Gastrocnemius medialis (tissue), 4 donors: ENCODE measurements at regions of chr2 and their contacts with region 1.

Region 1: DNA sequence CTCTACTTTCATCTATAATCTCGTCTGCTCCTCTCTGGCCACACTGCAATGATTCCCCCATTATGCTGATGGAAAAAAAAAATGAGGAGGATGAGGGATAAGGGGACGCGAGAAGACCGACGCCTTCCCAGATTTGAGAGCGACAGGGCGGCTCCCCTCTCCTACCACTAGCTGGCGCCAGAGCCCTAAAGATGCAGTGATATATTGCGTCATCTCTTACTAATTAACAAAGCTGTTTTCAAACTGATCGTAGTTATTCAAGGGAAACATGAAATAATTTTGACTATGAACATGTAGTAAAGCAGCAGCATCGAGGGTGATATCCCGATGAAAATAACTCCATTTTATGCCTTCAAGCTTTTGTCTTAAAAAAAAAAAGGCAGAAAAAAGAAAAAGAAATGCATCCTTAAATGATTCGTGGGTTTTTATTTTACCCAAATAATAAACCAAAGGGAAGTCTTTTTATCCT is 48.0 kb upstream of the HNRNPA3 start:
- DNase-seq: peak; percentile 59 to 71
- ATAC-seq: peak; percentile 81 to 83
- H3K4me3 ChIP-seq: peak overlapping the region; percentile 41 to 74 (median 52)
- H3K27ac ChIP-seq: peak overlapping the region; percentile 71 to 86 (median 80)
- H3K4me1 ChIP-seq: peaks cover 16 to 23% of the 10 kb centered on the region in 2 donors
- H3K27me3 ChIP-seq: no peaks in the 10 kb centered on the region
- CTCF ChIP-seq: peak; percentile 97 to 100 (median 100)
- POLR2A ChIP-seq: no peak

Region 2: GRCh38 chr2:176140513-176141317 is 1023.9 kb before region 1 on chr2:
- in situ Hi-C with region 1: loop called in 2 of 4 experiments (anchors 25 kb)
- intact Hi-C with region 1: no loop called
- DNase-seq: peak in 1 of 2 donors; percentile 39
- ATAC-seq: peak; percentile 53 to 69
- H3K4me3 ChIP-seq: peak overlapping the region; percentile 61 to 80 (median 74)
- H3K27ac ChIP-seq: peak overlapping the region; percentile 81 to 89 (median 86)
- H3K4me1 ChIP-seq: peaks cover 11 to 12% of the 10 kb centered on the region in 2 donors
- H3K27me3 ChIP-seq: peaks cover 0 to 23% (median 20%) of the 10 kb centered on the region in 3 donors
- CTCF ChIP-seq: peak; percentile 86 to 95 (median 90)
- POLR2A ChIP-seq: no peak

Region 3: DNA sequence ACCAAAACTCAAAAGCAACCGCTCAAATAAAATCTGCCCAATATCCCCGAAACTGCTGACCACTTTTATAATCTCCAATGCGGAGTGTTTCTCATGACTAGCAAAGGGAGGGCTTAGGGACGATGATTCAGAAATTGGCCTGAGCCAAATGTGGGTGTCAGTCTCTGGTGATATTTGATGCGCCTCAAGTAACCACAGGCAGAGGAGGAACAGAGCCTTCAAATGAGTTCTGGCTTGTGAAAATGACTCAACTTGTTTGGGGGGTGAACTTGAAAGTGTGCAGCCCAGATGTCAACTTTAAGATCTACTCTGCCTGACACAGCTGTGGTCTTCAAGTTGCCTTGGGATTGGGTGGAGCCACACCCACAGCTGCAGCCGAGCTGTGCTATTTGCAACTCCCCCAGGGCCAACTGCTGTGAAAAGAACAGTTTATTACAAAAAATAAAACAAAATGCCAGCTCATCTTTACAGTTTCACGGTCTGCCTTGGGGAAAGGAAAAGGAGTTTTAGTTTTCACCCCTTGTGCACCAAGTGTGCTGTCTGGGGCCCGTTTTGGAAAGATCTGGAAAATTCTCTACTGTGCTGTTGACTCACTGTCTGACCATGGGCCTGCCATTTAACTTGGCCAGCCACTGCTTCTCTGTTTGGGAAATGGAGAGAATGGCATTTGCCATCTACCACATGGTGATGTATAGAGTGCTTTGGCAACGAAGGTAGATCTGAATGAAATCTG is 673.3 kb before region 1 on chr2:
- in situ Hi-C with region 1: no loop called
- intact Hi-C with region 1: no loop called
- DNase-seq: peak; percentile 67 to 83
- ATAC-seq: peak; percentile 89 to 93
- H3K4me3 ChIP-seq: peak overlapping the region in 3 of 4 donors; percentile 12 to 45 (median 32)
- H3K27ac ChIP-seq: peak overlapping the region; percentile 64 to 75 (median 67)
- H3K4me1 ChIP-seq: peaks cover 3 to 6% of the 10 kb centered on the region in 2 donors
- H3K27me3 ChIP-seq: peaks cover 0 to 5% (median 0%) of the 10 kb centered on the region in 3 donors
- CTCF ChIP-seq: no peak
- POLR2A ChIP-seq: peak; percentile 17 to 31

Region 4: DNA sequence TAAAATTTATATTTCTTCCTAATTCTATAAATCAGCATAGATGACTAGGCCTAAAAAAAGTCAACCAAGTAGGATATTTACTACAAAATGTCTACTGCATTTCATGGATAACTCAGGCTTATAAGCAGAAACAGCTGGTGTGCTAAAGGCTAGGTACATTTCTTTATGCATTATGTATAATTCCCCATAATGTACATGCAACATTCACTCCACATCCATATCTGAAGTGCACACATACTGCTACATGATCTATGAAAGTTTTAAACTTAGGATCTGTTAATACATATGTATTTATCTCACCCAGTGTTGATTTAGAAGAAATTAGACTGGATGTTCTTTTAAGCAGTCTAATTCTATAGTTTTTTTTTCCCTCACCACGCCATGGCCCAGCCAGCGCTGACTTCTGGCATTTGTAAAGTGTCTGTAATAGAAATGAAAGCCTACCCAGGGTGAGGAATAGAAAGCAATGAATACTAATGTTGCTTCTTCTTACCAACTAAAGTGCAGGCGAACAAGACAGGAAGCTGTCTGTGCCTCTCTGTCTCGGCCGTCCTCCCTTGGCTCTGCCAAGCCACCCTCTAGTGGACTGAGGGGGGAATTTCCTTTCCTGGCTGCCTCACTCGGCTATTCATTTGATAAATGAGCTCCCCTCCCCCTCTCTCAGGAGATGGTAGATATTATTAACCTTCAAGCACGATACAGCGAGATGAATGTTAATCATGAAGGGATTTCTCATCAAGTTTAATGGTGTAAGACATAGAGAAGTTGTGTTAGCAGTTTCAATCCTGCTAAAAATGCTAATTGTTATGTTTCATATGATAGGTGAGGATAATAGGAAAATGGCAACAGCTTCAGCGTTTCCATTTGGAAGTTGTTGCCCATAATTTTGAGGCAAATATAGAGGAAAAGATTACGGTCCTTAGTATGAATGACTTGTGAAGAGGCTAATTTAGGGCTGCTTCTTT is 510.9 kb before region 1 on chr2:
- in situ Hi-C with region 1: no loop called
- intact Hi-C with region 1: no loop called
- DNase-seq: peak; percentile 20 to 45
- ATAC-seq: peak; percentile 54 to 81
- H3K4me3 ChIP-seq: no peak overlapping the region
- H3K27ac ChIP-seq: no peak overlapping the region
- H3K4me1 ChIP-seq: no peaks in the 10 kb centered on the region
- H3K27me3 ChIP-seq: peaks cover 0 to 3% (median 0%) of the 10 kb centered on the region in 3 donors
- CTCF ChIP-seq: peak in 4 of 5 experiments; percentile 32 to 71 (median 57)
- POLR2A ChIP-seq: no peak

Region 5: GRCh38 chr2:177010861-177011260 is 153.8 kb before region 1 on chr2:
- in situ Hi-C with region 1: no loop called
- intact Hi-C with region 1: no loop called
- DNase-seq: no peak
- ATAC-seq: no peak
- H3K4me3 ChIP-seq: no peak overlapping the region
- H3K27ac ChIP-seq: no peak overlapping the region
- H3K4me1 ChIP-seq: no peaks in the 10 kb centered on the region
- H3K27me3 ChIP-seq: no peaks in the 10 kb centered on the region
- CTCF ChIP-seq: no peak
- POLR2A ChIP-seq: no peak

Region 6: GRCh38 chr2:177263451-177264208 is 99.0 kb after region 1 on chr2:
- in situ Hi-C with region 1: loop called in 1 of 4 experiments (anchors 10 kb)
- intact Hi-C with region 1: loop called (anchors 1 kb)
- DNase-seq: peak; percentile 98 to 99
- ATAC-seq: peak; percentile 71
- H3K4me3 ChIP-seq: peak overlapping the region; percentile 86 to 99 (median 96)
- H3K27ac ChIP-seq: peak overlapping the region; percentile 99 to 100 (median 100)
- H3K4me1 ChIP-seq: peaks cover 54% of the 10 kb centered on the region in 2 donors
- H3K27me3 ChIP-seq: no peaks in the 10 kb centered on the region
- CTCF ChIP-seq: peak; percentile 86 to 98 (median 92)
- POLR2A ChIP-seq: peak; percentile 69 to 85

Region 7: GRCh38 chr2:177296040-177296439 is 131.4 kb after region 1 on chr2:
- in situ Hi-C with region 1: loop called in 1 of 4 experiments (anchors 10 kb)
- intact Hi-C with region 1: loop called (anchors 1 kb)
- DNase-seq: no peak
- ATAC-seq: peak in 1 of 2 donors; percentile 26
- H3K4me3 ChIP-seq: no peak overlapping the region
- H3K27ac ChIP-seq: peak overlapping the region in 2 of 4 donors; percentile 35 to 41
- H3K4me1 ChIP-seq: peaks cover 0 to 3% of the 10 kb centered on the region in 2 donors
- H3K27me3 ChIP-seq: no peaks in the 10 kb centered on the region
- CTCF ChIP-seq: peak in 3 of 5 experiments; percentile 10 to 50 (median 32)
- POLR2A ChIP-seq: no peak

Region 8: GRCh38 chr2:177419274-177419673 is 254.7 kb after region 1 on chr2:
- in situ Hi-C with region 1: loop called in 2 of 4 experiments (anchors 10 kb)
- intact Hi-C with region 1: loop called (anchors 2 kb)
- DNase-seq: no peak
- ATAC-seq: no peak
- H3K4me3 ChIP-seq: no peak overlapping the region
- H3K27ac ChIP-seq: no peak overlapping the region
- H3K4me1 ChIP-seq: peaks cover 9% of the 10 kb centered on the region in 2 donors
- H3K27me3 ChIP-seq: no peaks in the 10 kb centered on the region
- CTCF ChIP-seq: no peak
- POLR2A ChIP-seq: no peak

Region 9: GRCh38 chr2:177724398-177725287 is 560.0 kb after region 1 on chr2:
- in situ Hi-C with region 1: loop called in 1 of 4 experiments (anchors 10 kb)
- intact Hi-C with region 1: loop called (anchors 5 kb)
- DNase-seq: peak in 1 of 2 donors; percentile 14
- ATAC-seq: peak in 1 of 2 donors; percentile 73
- H3K4me3 ChIP-seq: no peak overlapping the region
- H3K27ac ChIP-seq: no peak overlapping the region
- H3K4me1 ChIP-seq: peaks cover 0 to 10% of the 10 kb centered on the region in 2 donors
- H3K27me3 ChIP-seq: no peaks in the 10 kb centered on the region
- CTCF ChIP-seq: peak; percentile 51 to 81 (median 78)
- POLR2A ChIP-seq: no peak